Endothelial cell of umbilical vein (primary cell): ENCODE measurements at regions of chr4 and their contacts with region 1.

Region 1: GRCh38 chr4:182938205-182938645 is 21.0 kb upstream of the DCTD start:
- DNase-seq: peak; percentile 68
- H3K4me3 ChIP-seq: no peak overlapping the region
- H3K27ac ChIP-seq: no peak overlapping the region
- H3K4me1 ChIP-seq: no peaks in the 10 kb centered on the region
- H3K27me3 ChIP-seq: peaks cover 5 to 12% of the 10 kb centered on the region in 2 experiments
- CTCF ChIP-seq: peak; percentile 91 to 93
- POLR2A ChIP-seq: no peak

Region 2: DNA sequence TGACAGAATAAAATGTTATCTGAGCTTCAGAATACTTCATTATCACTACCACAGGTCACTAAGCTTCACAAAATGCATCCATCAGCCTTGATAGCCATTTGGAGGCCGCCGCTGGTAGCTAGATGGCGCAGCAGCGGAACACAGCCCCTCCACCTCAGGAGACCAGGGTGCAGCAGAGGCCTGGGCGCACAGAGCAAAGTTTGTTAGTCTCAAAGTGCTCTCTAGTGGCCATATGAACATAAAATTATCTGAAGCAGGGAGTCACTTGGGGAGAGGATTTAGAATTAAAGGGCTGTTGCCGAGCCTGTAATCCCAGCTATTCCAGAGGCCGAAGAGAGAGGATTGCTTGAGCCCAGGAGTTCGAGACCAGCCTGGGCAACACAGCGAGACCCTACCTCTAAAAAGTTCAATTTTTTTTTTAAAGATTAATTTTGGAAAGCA is 12.9 kb before region 1 on chr4:
- CTCF ChIA-PET with region 1: interaction called, 23 read pairs
- POLR2A ChIA-PET with region 1: no interaction called
- dilution Hi-C with region 1: no loop called
- intact Hi-C with region 1: no loop called
- DNase-seq: peak; percentile 69
- H3K4me3 ChIP-seq: no peak overlapping the region
- H3K27ac ChIP-seq: no peak overlapping the region
- H3K4me1 ChIP-seq: no peaks in the 10 kb centered on the region
- H3K27me3 ChIP-seq: peaks cover 13 to 38% of the 10 kb centered on the region in 2 experiments
- CTCF ChIP-seq: peak; percentile 28 to 53
- POLR2A ChIP-seq: no peak

Region 3: DNA sequence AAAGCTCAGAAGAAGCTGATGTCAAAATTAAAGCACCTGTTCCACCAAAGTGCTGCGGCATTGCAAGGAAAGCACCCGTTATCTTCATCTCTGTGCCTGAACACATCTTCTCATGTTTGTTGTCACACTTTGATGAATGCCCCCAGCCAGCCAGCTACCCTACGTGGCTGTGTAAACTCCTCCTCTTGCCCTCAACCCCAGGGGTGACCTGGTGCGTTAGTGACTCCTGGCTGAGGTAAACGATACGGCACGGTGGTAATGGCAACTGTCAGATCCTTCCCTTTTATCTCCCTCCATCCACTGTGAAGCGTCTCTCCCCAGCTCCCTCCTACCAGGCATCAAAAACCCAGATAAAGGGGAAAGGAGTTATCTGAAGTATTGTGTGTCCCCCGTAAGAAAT is 70.3 kb after region 1 on chr4:
- CTCF ChIA-PET with region 1: interaction called, 10 read pairs
- POLR2A ChIA-PET with region 1: no interaction called
- dilution Hi-C with region 1: no loop called
- intact Hi-C with region 1: no loop called
- DNase-seq: no peak
- H3K4me3 ChIP-seq: no peak overlapping the region
- H3K27ac ChIP-seq: no peak overlapping the region
- H3K4me1 ChIP-seq: no peaks in the 10 kb centered on the region
- H3K27me3 ChIP-seq: peaks cover 6 to 18% of the 10 kb centered on the region in 2 experiments
- CTCF ChIP-seq: no peak
- POLR2A ChIP-seq: no peak

Region 4: DNA sequence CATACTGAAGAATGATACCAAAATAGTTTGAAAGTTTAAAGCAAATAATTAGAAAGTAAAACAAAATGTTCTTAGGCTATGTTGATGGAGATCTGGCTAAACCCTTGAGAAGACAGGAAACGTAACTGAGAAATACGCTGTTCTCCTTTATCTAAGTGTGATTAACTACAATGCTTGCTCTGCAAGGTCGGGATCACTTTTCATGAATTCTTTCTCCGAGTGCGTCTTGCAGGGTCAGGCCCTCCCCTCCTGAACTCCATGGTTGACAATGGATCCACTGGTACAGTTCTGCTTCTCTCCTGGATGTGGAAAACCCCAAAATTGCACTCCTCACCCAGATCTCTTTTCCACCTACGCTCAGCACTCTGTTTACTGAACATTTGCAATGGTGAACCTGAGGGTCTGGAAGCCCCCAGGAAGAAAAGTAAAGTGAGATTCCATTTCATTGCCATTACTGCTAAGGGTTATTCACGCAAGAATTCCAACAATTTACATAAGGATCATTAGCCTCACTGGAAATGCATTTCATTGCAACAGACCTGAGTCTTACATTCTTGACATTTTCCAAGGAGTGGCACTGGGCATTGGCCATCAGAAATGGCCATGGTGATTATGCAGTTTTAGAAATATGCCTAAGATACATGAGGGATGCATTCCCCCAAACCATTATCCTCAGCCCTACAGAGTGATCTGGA is 136.2 kb after region 1 on chr4:
- CTCF ChIA-PET with region 1: interaction called, 76 read pairs
- POLR2A ChIA-PET with region 1: no interaction called
- dilution Hi-C with region 1: no loop called
- intact Hi-C with region 1: loop called (anchors 1 kb)
- DNase-seq: no peak
- H3K4me3 ChIP-seq: no peak overlapping the region
- H3K27ac ChIP-seq: no peak overlapping the region
- H3K4me1 ChIP-seq: peaks cover 4% of the 10 kb centered on the region
- H3K27me3 ChIP-seq: no peaks in the 10 kb centered on the region
- CTCF ChIP-seq: no peak
- POLR2A ChIP-seq: no peak

Region 5: GRCh38 chr4:183256756-183257385 is 318.6 kb after region 1 on chr4:
- CTCF ChIA-PET with region 1: interaction called, 174 read pairs
- POLR2A ChIA-PET with region 1: no interaction called
- dilution Hi-C with region 1: no loop called
- intact Hi-C with region 1: loop called (anchors 1 kb)
- DNase-seq: peak; percentile 45
- H3K4me3 ChIP-seq: no peak overlapping the region
- H3K27ac ChIP-seq: no peak overlapping the region
- H3K4me1 ChIP-seq: no peaks in the 10 kb centered on the region
- H3K27me3 ChIP-seq: no peaks in the 10 kb centered on the region
- CTCF ChIP-seq: peak; percentile 59 to 81
- POLR2A ChIP-seq: no peak

Region 6: GRCh38 chr4:183398227-183399125 is 460.3 kb after region 1 on chr4:
- CTCF ChIA-PET with region 1: interaction called, 11 read pairs
- POLR2A ChIA-PET with region 1: no interaction called
- dilution Hi-C with region 1: no loop called
- intact Hi-C with region 1: loop called (anchors 2 kb)
- DNase-seq: peak; percentile 79
- H3K4me3 ChIP-seq: peak overlapping the region; percentile 8 to 43 (median 36)
- H3K27ac ChIP-seq: no peak overlapping the region
- H3K4me1 ChIP-seq: peaks cover 6% of the 10 kb centered on the region
- H3K27me3 ChIP-seq: no peaks in the 10 kb centered on the region
- CTCF ChIP-seq: peak; percentile 52 to 84
- POLR2A ChIP-seq: peak; percentile 33